Activated T-helper 1 cell treated with anti-CD3 and anti-CD28 coated beads, Interleukin-12 subunit alpha, Interleukin-12 subunit beta, Interleukin-2, Interleukin-4 antibody, amounts not matched to agents 30 ng/mL and 10 ng/mL and 1 ng/mL, durations not matched to agents 14 hours and 24 hours and 36 hours (primary cell): ENCODE measurements at regions of chr2 and their contacts with region 1.

Region 1: DNA sequence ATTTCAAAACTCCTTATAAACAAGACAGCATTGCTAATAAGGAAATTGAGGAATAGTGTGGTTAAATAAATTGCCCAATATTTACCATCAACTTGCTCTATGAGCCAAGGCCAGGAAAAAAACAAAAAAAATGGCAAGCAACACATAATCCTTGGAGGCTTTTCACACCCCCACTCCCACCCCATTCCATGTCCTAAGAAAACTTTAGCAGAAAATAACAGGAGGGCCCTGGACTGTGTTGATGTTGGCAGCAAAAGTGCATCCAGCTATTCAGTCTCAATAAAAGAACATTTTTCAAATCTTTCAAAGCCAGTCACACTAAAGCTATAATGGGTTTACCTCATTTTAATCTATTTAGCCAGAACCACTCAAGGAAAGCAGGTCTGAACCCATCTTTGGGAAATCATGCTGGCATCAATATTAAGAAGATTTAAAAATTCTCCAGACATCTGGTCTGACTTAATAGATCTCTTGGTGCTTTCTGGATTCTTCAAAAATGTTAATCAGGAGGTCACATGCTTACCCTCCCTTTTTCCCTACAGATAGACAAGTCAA is 34.6 kb upstream of the STK17B start:
- DNase-seq: no peak
- H3K4me3 Mint-ChIP-seq: no peak overlapping the region
- H3K27ac Mint-ChIP-seq: no peak overlapping the region
- H3K4me1 Mint-ChIP-seq: peaks cover 46% of the 10 kb centered on the region
- H3K27me3 Mint-ChIP-seq: no peaks in the 10 kb centered on the region

Region 2: GRCh38 chr2:196160101-196160500 is 45.9 kb before region 1 on chr2:
- intact Hi-C with region 1: loop called (anchors 1 kb)
- DNase-seq: peak; percentile 74
- H3K4me3 Mint-ChIP-seq: peak overlapping the region; percentile 76
- H3K27ac Mint-ChIP-seq: peak overlapping the region; percentile 93
- H3K4me1 Mint-ChIP-seq: peaks cover 91% of the 10 kb centered on the region
- H3K27me3 Mint-ChIP-seq: no peaks in the 10 kb centered on the region

Region 3: GRCh38 chr2:196249860-196250259 is 43.9 kb after region 1 on chr2:
- intact Hi-C with region 1: loop called (anchors 1 kb)
- DNase-seq: no peak
- H3K4me3 Mint-ChIP-seq: no peak overlapping the region
- H3K27ac Mint-ChIP-seq: peak overlapping the region; percentile 28
- H3K4me1 Mint-ChIP-seq: peaks cover 76% of the 10 kb centered on the region
- H3K27me3 Mint-ChIP-seq: no peaks in the 10 kb centered on the region

Region 4: DNA sequence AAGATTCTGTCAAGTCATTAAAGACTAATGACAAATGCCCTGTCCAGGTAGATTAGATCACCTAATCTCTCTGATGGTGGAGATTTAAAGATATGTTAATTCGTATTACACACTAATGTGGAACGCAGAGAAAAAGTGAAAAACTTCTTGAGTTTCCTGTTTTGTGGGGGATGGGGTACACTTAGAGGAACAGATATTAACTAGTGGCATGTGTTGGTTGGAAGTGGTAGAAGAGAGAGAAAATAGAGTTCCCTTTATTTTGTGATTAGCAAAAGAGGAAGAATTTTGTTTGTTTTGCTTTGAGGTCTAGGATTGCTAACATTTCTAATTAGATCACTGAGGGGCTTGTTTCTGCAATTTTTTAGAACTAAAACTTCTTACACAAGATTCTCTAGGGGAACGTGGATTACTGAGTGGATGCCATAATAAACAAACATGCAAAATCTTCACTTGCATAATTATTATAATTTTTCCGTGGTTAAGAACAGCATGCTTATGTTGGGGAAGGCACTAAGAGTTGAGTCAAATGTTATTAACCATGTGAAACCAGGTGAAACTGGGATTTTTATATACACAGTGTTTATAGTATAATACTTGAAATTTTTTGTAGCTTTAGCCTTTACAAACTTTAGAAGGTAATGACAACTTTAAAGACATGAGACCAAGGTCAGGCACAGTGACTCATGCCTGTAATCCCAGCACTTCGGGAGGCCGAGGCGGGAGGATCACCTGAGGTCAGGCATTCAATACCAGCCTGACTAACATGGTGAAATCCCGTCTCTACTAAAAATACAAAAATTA is 62.8 kb after region 1 on chr2:
- intact Hi-C with region 1: loop called (anchors 1 kb)
- DNase-seq: no peak
- H3K4me3 Mint-ChIP-seq: peak overlapping the region; percentile 25
- H3K27ac Mint-ChIP-seq: peak overlapping the region; percentile 29
- H3K4me1 Mint-ChIP-seq: peaks cover 57% of the 10 kb centered on the region
- H3K27me3 Mint-ChIP-seq: no peaks in the 10 kb centered on the region

Region 5: DNA sequence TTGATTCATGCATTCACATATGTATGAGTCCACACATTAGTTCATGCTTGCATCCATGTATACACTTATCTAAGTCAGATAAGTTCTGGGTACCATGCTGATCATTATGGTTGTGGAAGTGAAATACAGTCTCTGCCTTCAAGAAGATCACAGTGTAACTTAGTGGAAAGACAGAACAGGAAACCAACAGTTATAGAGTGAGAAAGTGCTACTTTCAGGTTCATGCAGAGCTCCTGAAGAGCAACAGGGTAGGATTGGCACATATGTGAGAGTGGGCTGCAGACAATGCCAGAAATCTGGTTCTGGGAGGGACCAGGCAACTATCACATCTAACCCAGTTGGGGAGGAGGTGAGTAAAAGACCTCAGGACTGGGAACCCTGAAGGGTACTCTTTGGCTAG is 755.9 kb after region 1 on chr2:
- intact Hi-C with region 1: loop called (anchors 1 kb)
- DNase-seq: no peak
- H3K4me3 Mint-ChIP-seq: peak overlapping the region; percentile 13
- H3K27ac Mint-ChIP-seq: peak overlapping the region; percentile 57
- H3K4me1 Mint-ChIP-seq: peaks cover 40% of the 10 kb centered on the region
- H3K27me3 Mint-ChIP-seq: no peaks in the 10 kb centered on the region

Region 6: DNA sequence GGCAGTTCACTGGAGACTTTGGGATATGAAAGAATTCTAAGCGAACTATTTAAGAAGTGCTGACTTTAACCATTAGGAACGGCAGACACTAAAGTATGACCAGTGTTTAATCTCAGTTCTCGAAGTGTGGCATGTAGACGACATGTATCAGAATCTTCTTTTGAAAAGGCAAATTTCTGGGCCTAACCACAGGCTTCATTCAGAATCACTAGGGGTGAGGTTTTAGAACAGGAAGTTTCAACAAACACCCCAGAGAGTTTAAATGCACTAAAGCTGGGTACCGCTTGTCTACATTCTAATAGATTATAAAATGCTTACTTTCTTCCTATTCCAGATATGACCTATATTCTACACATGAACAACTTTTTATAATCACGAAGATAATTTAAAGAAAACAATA is 924.4 kb after region 1 on chr2:
- intact Hi-C with region 1: no loop called
- DNase-seq: no peak
- H3K4me3 Mint-ChIP-seq: peak overlapping the region; percentile 68
- H3K27ac Mint-ChIP-seq: peak overlapping the region; percentile 80
- H3K4me1 Mint-ChIP-seq: peaks cover 66% of the 10 kb centered on the region
- H3K27me3 Mint-ChIP-seq: no peaks in the 10 kb centered on the region

Region 7: GRCh38 chr2:197168705-197169104 is 962.7 kb after region 1 on chr2:
- intact Hi-C with region 1: no loop called
- DNase-seq: peak; percentile 35
- H3K4me3 Mint-ChIP-seq: no peak overlapping the region
- H3K27ac Mint-ChIP-seq: peak overlapping the region; percentile 13
- H3K4me1 Mint-ChIP-seq: peaks cover 44% of the 10 kb centered on the region
- H3K27me3 Mint-ChIP-seq: no peaks in the 10 kb centered on the region